Right ventricle myocardium superior (tissue), 1 donor: ENCODE measurements at regions of chr7 and their contacts with region 1.

Region 1: DNA sequence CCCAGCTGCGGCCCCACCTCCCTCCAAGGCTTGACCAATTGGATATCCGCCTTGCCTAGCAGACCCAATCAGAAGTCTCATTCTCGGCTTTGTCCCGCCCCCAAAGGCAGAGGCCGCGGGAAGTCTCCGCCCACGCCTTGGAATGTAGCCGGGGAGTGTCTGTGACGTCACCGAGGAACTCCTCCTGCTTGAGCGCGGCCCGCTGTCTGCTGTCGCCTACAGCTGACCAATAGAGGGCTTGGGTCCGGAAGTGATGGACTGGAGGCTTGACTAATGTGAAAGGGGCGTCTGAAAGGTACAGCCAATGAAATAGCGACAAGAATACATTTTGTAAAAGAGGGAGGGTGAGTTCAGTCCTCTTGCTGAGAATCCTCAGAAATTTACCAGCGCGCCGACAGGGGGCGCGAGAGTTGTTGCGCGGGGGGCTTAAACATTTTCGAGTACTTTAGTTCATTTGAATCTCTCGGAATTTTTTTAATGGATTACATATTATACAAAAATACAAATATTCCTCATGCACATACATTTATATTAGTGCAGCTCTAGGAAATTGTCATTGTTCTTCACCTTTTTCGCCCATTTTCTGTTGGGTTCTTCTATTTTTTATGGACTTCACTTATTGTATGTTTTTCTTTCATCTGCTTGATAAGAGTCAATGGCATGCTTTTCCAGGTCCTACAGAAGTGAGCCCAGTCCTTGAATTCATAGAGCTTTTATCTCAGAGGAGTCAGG is 376 bp upstream of the CREB3L2 start:
- DNase-seq: peak; percentile 99
- ATAC-seq: peak; percentile 97

Region 2: GRCh38 chr7:137953665-137954470 is 48.4 kb before region 1 on chr7:
- intact Hi-C with region 1: loop called (anchors 10 kb)
- DNase-seq: no peak
- ATAC-seq: no peak